Naive thymus-derived CD4-positive, alpha-beta T cell (primary cell): ENCODE measurements at regions of chr9 and their contacts with region 1.

Region 1: GRCh38 chr9:88988796-88989560 is 2.3 kb upstream of the S1PR3 start:
- DNase-seq: peak in 5 of 9 donors; percentile 8 to 27 (median 16)
- ATAC-seq: peak; percentile 75
- H3K4me3 ChIP-seq: no peak overlapping the region
- H3K4me3 Mint-ChIP-seq: peak overlapping the region in 9 of 10 donors; percentile 31 to 68 (median 54)
- H3K27ac ChIP-seq: no peak overlapping the region
- H3K27ac Mint-ChIP-seq: peak overlapping the region in 3 of 9 donors; percentile 24 to 84 (median 27)
- H3K4me1 ChIP-seq: peaks cover 0 to 19% of the 10 kb centered on the region in 2 donors
- H3K4me1 Mint-ChIP-seq: peaks cover 11 to 34% (median 24%) of the 10 kb centered on the region in 7 donors
- H3K27me3 ChIP-seq: peaks cover 0 to 17% of the 10 kb centered on the region in 2 donors
- H3K27me3 Mint-ChIP-seq: peaks cover 21 to 49% (median 30%) of the 10 kb centered on the region in 5 donors

Region 2: GRCh38 chr9:88835038-88835466 is 153.9 kb before region 1 on chr9:
- CTCF ChIA-PET with region 1: no interaction called
- POLR2A ChIA-PET with region 1: no interaction called
- intact Hi-C with region 1: loop called (anchors 2 to 10 kb)
- DNase-seq: peak in 7 of 9 donors; percentile 45 to 81 (median 79)
- ATAC-seq: peak; percentile 95
- H3K4me3 ChIP-seq: no peak overlapping the region
- H3K4me3 Mint-ChIP-seq: peak overlapping the region in 9 of 10 donors; percentile 2 to 82 (median 64)
- H3K27ac ChIP-seq: no peak overlapping the region
- H3K27ac Mint-ChIP-seq: peak overlapping the region in 6 of 9 donors; percentile 22 to 90 (median 69)
- H3K4me1 ChIP-seq: peaks cover 16 to 25% of the 10 kb centered on the region in 2 donors
- H3K4me1 Mint-ChIP-seq: peaks cover 9 to 35% (median 27%) of the 10 kb centered on the region in 7 donors
- H3K27me3 ChIP-seq: peaks cover 0 to 19% of the 10 kb centered on the region in 2 donors
- H3K27me3 Mint-ChIP-seq: peaks cover 55 to 82% (median 72%) of the 10 kb centered on the region in 5 donors

Region 3: DNA sequence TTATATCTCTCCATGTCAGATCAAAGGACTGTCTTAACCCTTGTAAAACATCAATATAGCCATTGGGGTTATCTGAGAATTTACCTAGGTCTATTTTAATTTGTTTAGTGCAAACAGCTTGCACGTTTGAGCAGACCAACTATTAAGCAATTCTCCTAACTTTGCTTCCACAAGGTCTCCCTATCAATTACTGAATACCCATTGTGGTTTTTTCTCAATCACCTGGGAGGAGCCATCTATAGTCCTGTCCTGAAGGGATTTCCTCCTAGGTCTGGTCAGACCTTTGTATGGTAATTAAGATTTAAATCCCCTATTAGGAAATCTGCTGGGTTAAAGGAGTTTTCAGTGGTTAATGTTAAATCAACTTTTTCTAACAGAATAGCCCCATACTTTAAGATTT is 46.6 kb before region 1 on chr9:
- CTCF ChIA-PET with region 1: no interaction called
- POLR2A ChIA-PET with region 1: no interaction called
- intact Hi-C with region 1: no loop called
- DNase-seq: no peak
- ATAC-seq: no peak
- H3K4me3 ChIP-seq: no peak overlapping the region
- H3K4me3 Mint-ChIP-seq: no peak overlapping the region
- H3K27ac ChIP-seq: no peak overlapping the region
- H3K27ac Mint-ChIP-seq: no peak overlapping the region
- H3K4me1 ChIP-seq: no peaks in the 10 kb centered on the region
- H3K4me1 Mint-ChIP-seq: peaks cover 0 to 4% (median 0%) of the 10 kb centered on the region in 7 donors
- H3K27me3 ChIP-seq: no peaks in the 10 kb centered on the region
- H3K27me3 Mint-ChIP-seq: peaks cover 0 to 25% (median 3%) of the 10 kb centered on the region in 5 donors

Region 4: GRCh38 chr9:89000973-89001916 is 12.3 kb after region 1 on chr9:
- CTCF ChIA-PET with region 1: no interaction called
- POLR2A ChIA-PET with region 1: no interaction called
- intact Hi-C with region 1: no loop called
- DNase-seq: peak; percentile 55 to 79 (median 72)
- ATAC-seq: peak; percentile 78
- H3K4me3 ChIP-seq: no peak overlapping the region
- H3K4me3 Mint-ChIP-seq: peak overlapping the region in 2 of 10 donors; percentile 14 to 40
- H3K27ac ChIP-seq: no peak overlapping the region
- H3K27ac Mint-ChIP-seq: no peak overlapping the region
- H3K4me1 ChIP-seq: no peaks in the 10 kb centered on the region
- H3K4me1 Mint-ChIP-seq: peaks cover 4 to 12% (median 6%) of the 10 kb centered on the region in 7 donors
- H3K27me3 ChIP-seq: no peaks in the 10 kb centered on the region
- H3K27me3 Mint-ChIP-seq: peaks cover 6 to 44% (median 25%) of the 10 kb centered on the region in 5 donors

Region 5: DNA sequence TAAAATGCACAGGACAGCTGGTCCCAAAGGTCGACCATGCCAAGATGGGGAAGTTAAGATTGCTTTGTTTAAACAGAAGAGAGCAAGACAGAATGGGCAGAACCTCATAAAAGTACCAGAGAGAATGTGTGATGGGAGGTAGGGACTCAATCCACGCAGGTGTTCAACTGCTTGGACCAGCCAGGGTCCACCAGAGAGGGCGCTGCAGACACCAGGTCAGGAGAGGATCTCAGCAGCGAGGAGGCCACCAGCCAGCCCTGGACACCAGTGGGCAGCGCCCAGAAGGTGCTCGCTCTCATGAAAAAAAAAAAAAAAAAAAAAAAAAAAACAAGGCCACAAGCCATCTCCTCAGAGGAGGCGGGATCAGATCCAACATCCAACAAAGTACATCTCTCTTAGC is 107.8 kb after region 1 on chr9:
- CTCF ChIA-PET with region 1: no interaction called
- POLR2A ChIA-PET with region 1: no interaction called
- intact Hi-C with region 1: no loop called
- DNase-seq: no peak
- ATAC-seq: no peak
- H3K4me3 ChIP-seq: no peak overlapping the region
- H3K4me3 Mint-ChIP-seq: no peak overlapping the region
- H3K27ac ChIP-seq: no peak overlapping the region
- H3K27ac Mint-ChIP-seq: no peak overlapping the region
- H3K4me1 ChIP-seq: no peaks in the 10 kb centered on the region
- H3K4me1 Mint-ChIP-seq: no peaks in the 10 kb centered on the region
- H3K27me3 ChIP-seq: no peaks in the 10 kb centered on the region
- H3K27me3 Mint-ChIP-seq: peaks cover 8 to 19% (median 11%) of the 10 kb centered on the region in 5 donors